GM23248 (cell line): ENCODE measurements at regions of chr7 and their contacts with region 1.

Region 1: DNA sequence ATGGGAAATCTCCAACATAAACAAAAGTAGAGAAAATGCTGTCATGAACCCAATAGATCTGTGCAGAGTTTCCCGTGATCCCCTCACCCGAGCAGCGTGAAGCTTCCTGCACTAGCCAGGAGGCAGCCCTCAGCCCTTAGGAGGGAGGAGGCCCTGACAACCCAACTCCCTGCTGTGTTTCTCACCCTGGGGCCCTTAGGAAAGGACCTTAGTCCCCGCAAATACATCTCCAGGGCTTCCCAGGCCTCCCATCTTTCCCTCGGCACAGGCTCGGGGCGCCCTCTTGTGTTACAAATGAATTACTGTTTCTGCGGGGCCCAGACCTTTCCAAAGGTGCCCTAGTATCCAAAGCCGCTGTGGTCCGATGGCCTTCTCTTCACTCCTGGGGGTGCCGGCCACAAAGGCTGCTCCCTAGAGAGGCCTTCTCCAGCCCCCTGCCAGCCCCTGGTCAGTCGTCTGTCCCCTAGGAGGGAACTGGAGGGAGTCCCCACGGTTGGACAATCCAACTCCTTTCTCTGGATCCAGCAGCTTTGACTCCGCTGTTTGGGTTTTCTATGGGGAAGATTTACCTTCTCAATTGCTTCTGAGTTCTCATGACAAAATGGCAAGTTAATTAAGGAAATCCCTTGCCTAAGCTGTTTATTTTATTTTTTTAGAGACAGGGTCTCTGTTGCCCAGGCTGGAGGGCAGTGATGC is 49.9 kb upstream of the SH2B2 start:
- DNase-seq: peak; percentile 80
- H3K4me3 ChIP-seq: no peak overlapping the region
- H3K27ac ChIP-seq: no peak overlapping the region
- H3K4me1 ChIP-seq: no peaks in the 10 kb centered on the region
- H3K27me3 ChIP-seq: no peaks in the 10 kb centered on the region

Region 2: GRCh38 chr7:101586078-101586905 is 650.4 kb before region 1 on chr7:
- in situ Hi-C with region 1: loop called (anchors 25 kb)
- DNase-seq: no peak
- H3K4me3 ChIP-seq: no peak overlapping the region
- H3K27ac ChIP-seq: no peak overlapping the region
- H3K4me1 ChIP-seq: no peaks in the 10 kb centered on the region
- H3K27me3 ChIP-seq: peaks cover 1% of the 10 kb centered on the region; the same call in 1 of the 2 replicates

Region 3: DNA sequence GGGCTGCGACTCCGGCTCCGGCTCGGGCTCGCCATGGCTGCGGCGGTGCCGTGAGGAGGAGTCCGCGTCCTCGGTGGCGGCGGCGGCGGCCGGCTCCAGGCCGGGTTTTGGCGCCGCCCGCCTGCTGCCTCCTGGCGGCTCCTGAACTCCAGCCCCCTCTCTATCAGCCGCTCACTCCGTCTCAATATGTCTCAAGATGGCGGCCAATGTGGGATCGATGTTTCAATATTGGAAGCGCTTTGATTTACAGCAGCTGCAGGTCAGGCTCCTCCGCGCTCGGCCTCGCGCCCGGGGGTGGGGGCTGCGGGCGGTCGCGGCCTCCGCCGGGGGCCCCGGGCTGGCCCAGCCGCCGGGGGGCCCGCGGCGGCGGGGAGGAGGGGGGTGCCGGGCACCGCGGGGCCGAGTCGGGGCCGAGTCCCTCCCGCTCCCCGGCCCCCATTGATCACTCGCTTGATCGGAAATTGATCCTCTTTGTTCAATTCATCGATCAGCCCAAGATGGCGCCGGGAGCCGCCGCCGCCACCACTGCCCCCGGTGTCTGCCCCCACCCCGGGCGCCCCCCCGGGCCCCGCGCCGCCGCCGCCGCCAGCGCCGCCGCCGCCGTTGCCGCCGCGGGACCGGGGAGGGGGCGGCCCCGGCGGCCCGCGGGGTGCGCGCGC is 420.8 kb before region 1 on chr7:
- in situ Hi-C with region 1: loop called (anchors 10 kb)
- DNase-seq: peak; percentile 94
- H3K4me3 ChIP-seq: peak overlapping the region; percentile 74
- H3K27ac ChIP-seq: peak overlapping the region; percentile 33; the same call in 1 of the 2 replicates
- H3K4me1 ChIP-seq: peaks cover 7% of the 10 kb centered on the region; the same call in 1 of the 2 replicates
- H3K27me3 ChIP-seq: no peaks in the 10 kb centered on the region